Activated CD8-positive, alpha-beta T cell treated with anti-CD3 and anti-CD28 coated beads for 36 hours (primary cell): ENCODE measurements at regions of chr17 and their contacts with region 1.

Region 1: GRCh38 chr17:4789901-4790704 is 1.3 kb downstream of the GLTPD2 start:
- DNase-seq: peak; percentile 89
- ATAC-seq: peak; percentile 88
- H3K4me3 Mint-ChIP-seq: peak overlapping the region; percentile 79
- H3K27ac Mint-ChIP-seq: peak overlapping the region; percentile 91
- H3K4me1 Mint-ChIP-seq: peaks cover 22% of the 10 kb centered on the region
- H3K27me3 Mint-ChIP-seq: peaks cover 34% of the 10 kb centered on the region
- CTCF ChIP-seq: peak; percentile 91

Region 2: DNA sequence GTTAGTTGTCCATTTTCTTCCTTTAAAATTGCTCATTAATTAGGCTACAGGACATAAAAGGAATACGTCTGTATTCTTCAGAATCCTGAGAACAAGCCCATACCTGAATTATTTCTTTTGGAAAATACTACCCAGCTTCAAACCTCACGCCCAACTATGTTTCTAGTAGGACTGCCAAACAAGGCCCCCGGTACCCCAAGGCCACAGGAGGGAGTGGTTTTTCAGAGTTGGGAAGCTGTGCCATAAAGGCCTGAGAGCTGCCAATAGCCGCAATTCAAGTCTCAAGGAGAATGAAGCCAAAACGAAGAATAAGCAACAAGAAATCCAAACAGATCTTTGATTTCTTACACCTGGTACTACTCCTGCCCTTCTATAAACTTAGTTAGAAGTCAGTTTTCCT is 471.9 kb before region 1 on chr17:
- CTCF ChIA-PET with region 1: no interaction called
- POLR2A ChIA-PET with region 1: no interaction called
- intact Hi-C with region 1: no loop called
- DNase-seq: no peak
- ATAC-seq: no peak
- H3K4me3 Mint-ChIP-seq: no peak overlapping the region
- H3K27ac Mint-ChIP-seq: no peak overlapping the region
- H3K4me1 Mint-ChIP-seq: peaks cover 50% of the 10 kb centered on the region
- H3K27me3 Mint-ChIP-seq: no peaks in the 10 kb centered on the region
- CTCF ChIP-seq: no peak

Region 3: GRCh38 chr17:4658478-4659305 is 131.4 kb before region 1 on chr17:
- CTCF ChIA-PET with region 1: no interaction called
- POLR2A ChIA-PET with region 1: no interaction called
- intact Hi-C with region 1: no loop called
- DNase-seq: peak; percentile 92
- ATAC-seq: peak; percentile 98
- H3K4me3 Mint-ChIP-seq: no peak overlapping the region
- H3K27ac Mint-ChIP-seq: no peak overlapping the region
- H3K4me1 Mint-ChIP-seq: peaks cover 11% of the 10 kb centered on the region
- H3K27me3 Mint-ChIP-seq: peaks cover 4% of the 10 kb centered on the region
- CTCF ChIP-seq: no peak

Region 4: GRCh38 chr17:4709794-4710692 is 80.1 kb before region 1 on chr17 and contains the start of gene ARRB2:
- CTCF ChIA-PET with region 1: interaction called, 13 read pairs
- POLR2A ChIA-PET with region 1: interaction called, 6 read pairs
- intact Hi-C with region 1: no loop called
- DNase-seq: peak; percentile 99
- ATAC-seq: peak; percentile 84
- H3K4me3 Mint-ChIP-seq: peak within 1 kb of the TSS; percentile 98
- H3K27ac Mint-ChIP-seq: peak within 1 kb of the TSS; percentile 94
- H3K4me1 Mint-ChIP-seq: peaks cover 46% of the 10 kb centered on the region
- H3K27me3 Mint-ChIP-seq: no peaks in the 10 kb centered on the region
- CTCF ChIP-seq: peak; percentile 58
- total RNA-seq, gene ARRB2: 163 to 176 TPM

Region 5: GRCh38 chr17:4747847-4748246 is 42.3 kb before region 1 on chr17:
- CTCF ChIA-PET with region 1: interaction called, 12 read pairs
- POLR2A ChIA-PET with region 1: interaction called, 3 read pairs
- intact Hi-C with region 1: no loop called
- DNase-seq: peak; percentile 48
- ATAC-seq: peak; percentile 87
- H3K4me3 Mint-ChIP-seq: peak overlapping the region; percentile 20
- H3K27ac Mint-ChIP-seq: no peak overlapping the region
- H3K4me1 Mint-ChIP-seq: peaks cover 13% of the 10 kb centered on the region
- H3K27me3 Mint-ChIP-seq: peaks cover 2% of the 10 kb centered on the region
- CTCF ChIP-seq: no peak

Region 6: DNA sequence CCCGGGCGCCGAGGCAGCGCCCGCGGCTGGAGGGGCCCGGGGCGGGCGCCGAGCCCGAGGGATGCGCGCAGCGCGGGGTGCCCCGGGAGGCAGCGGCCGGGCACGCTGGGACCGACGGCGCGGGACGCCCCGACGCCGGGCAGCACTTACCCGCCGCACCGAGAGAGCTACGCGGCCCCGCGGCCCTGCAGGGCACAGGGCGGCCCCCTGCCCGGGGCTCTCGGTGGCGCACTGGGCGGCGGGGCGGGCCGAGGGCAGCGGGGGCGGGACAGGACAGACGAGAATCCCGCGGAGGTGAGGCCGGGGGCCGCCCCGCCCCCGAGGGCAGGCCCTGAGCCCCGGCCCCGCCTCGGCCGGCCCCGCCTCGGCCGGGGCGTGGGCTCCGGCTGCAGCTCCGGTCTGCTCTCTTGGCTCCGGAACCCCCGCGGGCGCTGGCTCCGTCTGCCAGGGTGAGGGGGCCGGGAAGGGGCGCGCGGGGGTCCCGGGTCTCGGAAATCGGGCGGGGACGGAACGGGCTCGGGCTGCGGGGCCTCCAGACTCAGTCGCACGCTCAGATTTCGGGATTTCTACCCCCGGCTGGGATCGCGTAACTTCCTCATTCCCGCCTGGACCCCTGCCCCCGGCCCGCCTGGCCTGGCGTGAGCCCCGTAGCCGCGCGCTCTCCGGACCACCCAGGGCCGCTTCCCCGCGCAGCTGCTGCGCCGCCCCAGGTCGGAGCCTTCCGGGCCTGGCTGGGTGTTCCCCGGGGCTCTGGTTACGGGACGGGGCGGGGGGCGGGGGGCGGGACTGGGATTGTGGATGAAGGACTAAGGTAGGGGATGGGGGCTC is 16.9 kb after region 1 on chr17 and contains the start of gene PLD2:
- CTCF ChIA-PET with region 1: interaction called, 15 read pairs
- POLR2A ChIA-PET with region 1: interaction called, 3 read pairs
- intact Hi-C with region 1: no loop called
- DNase-seq: peak; percentile 92
- ATAC-seq: peak; percentile 99
- H3K4me3 Mint-ChIP-seq: peak within 1 kb of the TSS; percentile 69
- H3K27ac Mint-ChIP-seq: no peak within 1 kb of the TSS
- H3K4me1 Mint-ChIP-seq: peaks cover 14% of the 10 kb centered on the region
- H3K27me3 Mint-ChIP-seq: no peaks in the 10 kb centered on the region
- CTCF ChIP-seq: no peak
- total RNA-seq, gene PLD2: 6.2 to 6.8 TPM